IMR-90 (cell line): ENCODE measurements at regions of chr4 and their contacts with region 1.

Region 1: DNA sequence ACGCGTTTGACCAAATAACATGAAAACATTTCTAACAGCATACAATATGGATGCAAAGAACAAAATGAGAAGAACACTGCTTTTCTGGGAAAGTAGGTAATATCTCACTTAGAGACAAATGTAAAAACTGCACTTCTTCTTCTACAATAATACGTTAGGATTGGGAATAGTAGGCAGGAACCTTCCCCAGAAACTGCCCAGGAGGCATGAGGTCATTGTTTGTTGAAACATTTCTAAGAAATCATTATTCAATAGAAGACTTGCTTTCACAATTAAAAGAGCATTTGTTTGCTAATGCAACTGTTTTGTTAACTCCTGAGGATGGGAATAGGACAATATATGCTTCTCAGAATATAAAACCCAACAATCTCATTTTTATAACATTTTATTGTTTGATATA is 630.8 kb upstream of the FRG1 start:
- DNase-seq: peak; percentile 14
- ATAC-seq: no peak; the same call in 1 of the 2 replicates
- H3K4me3 ChIP-seq: no peak overlapping the region
- H3K27ac ChIP-seq: no peak overlapping the region
- H3K4me1 ChIP-seq: no peaks in the 10 kb centered on the region
- H3K27me3 ChIP-seq: no peaks in the 10 kb centered on the region
- CTCF ChIP-seq: no peak
- POLR2A ChIP-seq: no peak
- RAD21 ChIP-seq: no peak

Region 2: GRCh38 chr4:189255636-189256035 is 54.2 kb before region 1 on chr4:
- CTCF ChIA-PET with region 1: no interaction called
- POLR2A ChIA-PET with region 1: no interaction called
- dilution Hi-C with region 1: no loop called
- in situ Hi-C with region 1: no loop called
- intact Hi-C with region 1: no loop called
- DNase-seq: no peak
- ATAC-seq: no peak
- H3K4me3 ChIP-seq: no peak overlapping the region
- H3K27ac ChIP-seq: no peak overlapping the region
- H3K4me1 ChIP-seq: no peaks in the 10 kb centered on the region
- H3K27me3 ChIP-seq: no peaks in the 10 kb centered on the region
- CTCF ChIP-seq: no peak
- POLR2A ChIP-seq: no peak
- RAD21 ChIP-seq: no peak

Region 3: DNA sequence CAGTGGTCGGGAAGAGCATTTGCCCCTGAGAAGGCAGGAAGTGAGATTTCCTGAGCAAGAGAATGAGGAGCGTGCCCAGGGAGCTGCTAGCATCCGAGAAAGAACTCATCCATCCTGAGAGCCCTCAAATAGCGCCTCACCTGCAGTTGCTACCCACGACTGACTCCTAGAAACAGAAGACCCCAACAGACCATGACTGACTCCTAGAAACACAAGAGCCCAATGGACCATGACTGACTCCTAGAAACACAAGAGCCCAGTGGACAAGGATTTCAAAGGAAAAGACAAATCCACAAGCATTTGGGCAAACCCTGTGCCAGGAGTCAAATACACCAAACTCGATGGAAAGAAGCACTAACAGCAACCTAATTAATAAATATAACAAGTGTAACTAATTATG is 55.6 kb after region 1 on chr4:
- CTCF ChIA-PET with region 1: no interaction called
- POLR2A ChIA-PET with region 1: no interaction called
- dilution Hi-C with region 1: no loop called
- in situ Hi-C with region 1: no loop called
- intact Hi-C with region 1: loop called (anchors 5 kb)
- DNase-seq: no peak
- ATAC-seq: no peak
- H3K4me3 ChIP-seq: no peak overlapping the region
- H3K27ac ChIP-seq: no peak overlapping the region
- H3K4me1 ChIP-seq: no peaks in the 10 kb centered on the region
- H3K27me3 ChIP-seq: no peaks in the 10 kb centered on the region
- CTCF ChIP-seq: no peak
- POLR2A ChIP-seq: no peak
- RAD21 ChIP-seq: no peak

Region 4: DNA sequence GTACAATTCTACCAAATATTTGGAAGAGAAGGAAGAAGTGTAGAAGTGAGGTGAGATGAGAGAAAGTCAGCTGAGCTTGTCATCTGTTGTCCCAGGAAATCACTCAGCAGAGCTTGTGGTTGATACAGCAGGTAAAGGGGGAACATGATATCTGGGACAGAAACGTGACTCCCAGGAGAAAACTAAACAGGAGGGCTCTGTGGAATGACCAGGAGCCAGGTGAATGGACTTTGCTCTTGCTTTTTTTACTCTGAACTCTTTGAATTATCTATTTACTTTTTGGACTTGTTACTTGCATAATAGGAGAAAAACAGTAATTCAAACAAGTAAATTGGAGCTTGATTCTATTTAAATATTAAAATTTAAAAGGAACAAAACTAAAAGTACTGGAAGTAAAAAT is 75.3 kb after region 1 on chr4:
- CTCF ChIA-PET with region 1: no interaction called
- POLR2A ChIA-PET with region 1: no interaction called
- dilution Hi-C with region 1: no loop called
- in situ Hi-C with region 1: loop called (anchors 10 kb)
- intact Hi-C with region 1: loop called (anchors 5 kb)
- DNase-seq: no peak
- ATAC-seq: no peak
- H3K4me3 ChIP-seq: no peak overlapping the region
- H3K27ac ChIP-seq: no peak overlapping the region
- H3K4me1 ChIP-seq: no peaks in the 10 kb centered on the region
- H3K27me3 ChIP-seq: no peaks in the 10 kb centered on the region
- CTCF ChIP-seq: no peak
- POLR2A ChIP-seq: no peak
- RAD21 ChIP-seq: no peak

Region 5: DNA sequence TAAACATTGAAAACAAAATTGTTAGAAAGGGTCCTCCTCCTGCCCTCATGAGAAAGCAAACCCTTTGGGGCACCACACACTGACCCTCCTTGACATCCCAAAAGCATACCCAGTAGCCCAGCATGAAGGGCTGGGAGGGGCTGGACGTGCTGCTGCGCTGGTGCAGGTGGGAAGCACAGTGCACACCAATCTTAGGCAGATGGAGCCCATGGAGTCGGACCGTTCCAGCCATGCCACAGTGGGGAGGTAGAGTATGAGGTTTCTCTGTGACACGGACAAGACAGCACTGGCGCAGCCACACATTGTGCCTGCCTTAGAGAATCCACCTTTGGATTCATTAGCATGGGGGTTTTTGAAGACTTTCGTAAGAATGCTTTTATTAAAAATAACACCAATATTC is 86.6 kb after region 1 on chr4:
- CTCF ChIA-PET with region 1: no interaction called
- POLR2A ChIA-PET with region 1: no interaction called
- dilution Hi-C with region 1: no loop called
- in situ Hi-C with region 1: loop called (anchors 10 kb)
- intact Hi-C with region 1: no loop called
- DNase-seq: no peak
- ATAC-seq: no peak
- H3K4me3 ChIP-seq: no peak overlapping the region
- H3K27ac ChIP-seq: no peak overlapping the region
- H3K4me1 ChIP-seq: no peaks in the 10 kb centered on the region
- H3K27me3 ChIP-seq: no peaks in the 10 kb centered on the region
- CTCF ChIP-seq: no peak
- POLR2A ChIP-seq: no peak
- RAD21 ChIP-seq: no peak

Region 6: GRCh38 chr4:189404271-189404670 is 94.4 kb after region 1 on chr4:
- CTCF ChIA-PET with region 1: no interaction called
- POLR2A ChIA-PET with region 1: no interaction called
- dilution Hi-C with region 1: no loop called
- in situ Hi-C with region 1: loop called (anchors 10 kb)
- intact Hi-C with region 1: loop called (anchors 2 kb)
- DNase-seq: no peak
- ATAC-seq: no peak
- H3K4me3 ChIP-seq: no peak overlapping the region
- H3K27ac ChIP-seq: no peak overlapping the region
- H3K4me1 ChIP-seq: no peaks in the 10 kb centered on the region
- H3K27me3 ChIP-seq: no peaks in the 10 kb centered on the region
- CTCF ChIP-seq: no peak
- POLR2A ChIP-seq: no peak
- RAD21 ChIP-seq: no peak

Region 7: GRCh38 chr4:189615217-189615663 is 305.4 kb after region 1 on chr4:
- CTCF ChIA-PET with region 1: no interaction called
- POLR2A ChIA-PET with region 1: no interaction called
- dilution Hi-C with region 1: no loop called
- in situ Hi-C with region 1: no loop called
- intact Hi-C with region 1: no loop called
- DNase-seq: no peak
- ATAC-seq: no peak
- H3K4me3 ChIP-seq: no peak overlapping the region
- H3K27ac ChIP-seq: no peak overlapping the region
- H3K4me1 ChIP-seq: no peaks in the 10 kb centered on the region
- H3K27me3 ChIP-seq: no peaks in the 10 kb centered on the region
- CTCF ChIP-seq: no peak
- POLR2A ChIP-seq: no peak
- RAD21 ChIP-seq: no peak